K562 (cell line): ENCODE measurements at regions of chr3 and their contacts with region 1.

Region 1: GRCh38 chr3:170180908-170181879 is at the start of gene PHC3:
- DNase-seq: peak; percentile 96 to 99 (median 98)
- ATAC-seq: peak; percentile 92
- H3K4me3 ChIP-seq: peak within 1 kb of the TSS; percentile 77
- H3K27ac ChIP-seq: peak within 1 kb of the TSS; percentile 91
- H3K4me1 ChIP-seq: peaks cover 4 to 15% of the 10 kb centered on the region in 2 experiments; a peak in 3 of 5 replicates
- H3K27me3 ChIP-seq: no peaks in the 10 kb centered on the region
- CTCF ChIP-seq: no peak
- EP300 ChIP-seq: no peak
- POLR2A ChIP-seq: peak; percentile 94
- RAD21 ChIP-seq: no peak
- polyA plus RNA-seq, gene PHC3: 4.6 to 6.0 TPM

Region 2: GRCh38 chr3:170044795-170045244 is 136.4 kb before region 1 on chr3:
- CTCF ChIA-PET with region 1: no interaction called
- POLR2A ChIA-PET with region 1: no interaction called
- in situ Hi-C with region 1: no loop called
- intact Hi-C with region 1: no loop called
- DNase-seq: no peak
- ATAC-seq: no peak; the same call in 1 of the 3 replicates
- H3K4me3 ChIP-seq: no peak overlapping the region
- H3K27ac ChIP-seq: no peak overlapping the region
- H3K4me1 ChIP-seq: peaks cover 0 to 2% of the 10 kb centered on the region in 2 experiments; a peak in 1 of 5 replicates
- H3K27me3 ChIP-seq: no peaks in the 10 kb centered on the region
- CTCF ChIP-seq: no peak
- EP300 ChIP-seq: no peak
- POLR2A ChIP-seq: no peak
- RAD21 ChIP-seq: no peak

Region 3: GRCh38 chr3:170221924-170222646 is 40.9 kb after region 1 on chr3 and contains the start of gene PRKCI:
- CTCF ChIA-PET with region 1: no interaction called
- POLR2A ChIA-PET with region 1: interaction called, 3 read pairs
- in situ Hi-C with region 1: no loop called
- intact Hi-C with region 1: loop called (anchors 2 kb)
- DNase-seq: peak; percentile 95 to 98 (median 96)
- ATAC-seq: peak; percentile 98
- H3K4me3 ChIP-seq: peak within 1 kb of the TSS; percentile 91
- H3K27ac ChIP-seq: peak within 1 kb of the TSS; percentile 100
- H3K4me1 ChIP-seq: peaks cover 2 to 4% of the 10 kb centered on the region in 2 experiments; a peak in 3 of 5 replicates
- H3K27me3 ChIP-seq: no peaks in the 10 kb centered on the region
- CTCF ChIP-seq: no peak
- EP300 ChIP-seq: no peak
- POLR2A ChIP-seq: peak; percentile 77
- RAD21 ChIP-seq: no peak
- polyA plus RNA-seq, gene PRKCI: 10.5 to 13.5 TPM

Region 4: DNA sequence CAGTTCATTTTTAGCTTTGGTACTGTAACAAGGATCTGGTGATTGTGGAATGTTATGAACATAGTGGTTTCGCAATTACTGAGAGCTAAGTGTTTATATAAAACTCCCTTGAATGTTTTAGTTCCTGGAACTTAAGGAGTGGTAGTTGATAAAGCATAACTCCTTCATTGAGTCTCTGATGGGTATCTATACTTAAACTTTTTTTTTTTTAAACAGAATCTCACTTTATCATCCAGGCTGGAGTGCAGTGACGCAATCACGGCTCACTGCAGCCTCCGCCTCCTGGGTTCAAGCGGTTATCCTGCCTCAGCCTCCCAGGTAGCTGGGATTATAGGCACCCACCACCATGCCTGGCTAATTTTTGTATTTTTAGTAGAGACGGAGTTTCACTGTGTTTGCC is 52.3 kb after region 1 on chr3:
- CTCF ChIA-PET with region 1: no interaction called
- POLR2A ChIA-PET with region 1: no interaction called
- in situ Hi-C with region 1: no loop called
- intact Hi-C with region 1: no loop called
- DNase-seq: peak in 1 of 4 experiments; percentile 8
- ATAC-seq: no peak
- H3K4me3 ChIP-seq: no peak overlapping the region
- H3K27ac ChIP-seq: no peak overlapping the region
- H3K4me1 ChIP-seq: no peaks in the 10 kb centered on the region
- H3K27me3 ChIP-seq: no peaks in the 10 kb centered on the region
- CTCF ChIP-seq: no peak
- EP300 ChIP-seq: no peak
- POLR2A ChIP-seq: no peak
- RAD21 ChIP-seq: no peak